PC-3 (cell line): ENCODE measurements at regions of chr13 and their contacts with region 1.

Region 1: GRCh38 chr13:50617134-50617721 is 226.3 kb downstream of the DLEU7 start:
- DNase-seq: peak; percentile 87
- ATAC-seq: peak; percentile 97
- H3K4me3 ChIP-seq: no peak overlapping the region
- H3K27ac ChIP-seq: peak overlapping the region; percentile 43
- H3K4me1 ChIP-seq: peaks cover 17% of the 10 kb centered on the region
- H3K27me3 ChIP-seq: 0 out of 2 replicates have a peak, but pooled peaks cover 2% of the 10 kb centered on the region
- CTCF ChIP-seq: no peak

Region 2: GRCh38 chr13:50467156-50468110 is 149.8 kb before region 1 on chr13:
- CTCF ChIA-PET with region 1: no interaction called
- POLR2A ChIA-PET with region 1: no interaction called
- intact Hi-C with region 1: no loop called
- DNase-seq: no peak
- ATAC-seq: no peak
- H3K4me3 ChIP-seq: no peak overlapping the region
- H3K27ac ChIP-seq: no peak overlapping the region
- H3K4me1 ChIP-seq: no peaks in the 10 kb centered on the region
- H3K27me3 ChIP-seq: no peaks in the 10 kb centered on the region
- CTCF ChIP-seq: no peak

Region 3: DNA sequence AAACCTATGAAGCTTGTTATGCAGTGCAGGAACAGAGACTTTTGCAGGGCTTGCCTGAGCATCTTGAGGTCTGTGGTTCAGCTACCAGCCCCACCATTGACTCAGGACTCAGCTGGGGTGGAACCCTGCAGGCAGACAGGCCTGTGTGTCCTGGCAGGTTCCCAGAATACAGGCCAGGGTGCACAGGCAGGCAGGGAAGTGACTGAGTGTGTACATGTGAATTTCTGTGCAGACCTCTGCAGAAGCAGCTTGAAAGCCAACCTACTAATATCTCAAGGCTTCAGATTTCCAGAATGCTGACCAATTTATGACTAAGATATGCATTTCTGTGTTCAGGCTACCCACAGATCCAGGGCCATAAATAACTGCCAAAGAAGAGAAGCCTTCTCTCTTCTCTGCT is 28.1 kb before region 1 on chr13:
- CTCF ChIA-PET with region 1: no interaction called
- POLR2A ChIA-PET with region 1: no interaction called
- intact Hi-C with region 1: loop called (anchors 1 kb)
- DNase-seq: peak; percentile 61
- ATAC-seq: peak; percentile 61
- H3K4me3 ChIP-seq: no peak overlapping the region
- H3K27ac ChIP-seq: peak overlapping the region; percentile 64
- H3K4me1 ChIP-seq: peaks cover 27% of the 10 kb centered on the region; the same call in 1 of the 2 replicates
- H3K27me3 ChIP-seq: no peaks in the 10 kb centered on the region
- CTCF ChIP-seq: no peak